ENCODE measurements at regions of chr6 and their contacts with region 1.

Region 1: GRCh38 chr6:36724514-36725390 is 27.1 kb downstream of the RAB44 start:
- DNase-seq: peak; percentile 49 to 67
- H3K4me3 ChIP-seq: no peak overlapping the region
- H3K27ac ChIP-seq: no peak overlapping the region
- H3K4me1 ChIP-seq: no peaks in the 10 kb centered on the region
- H3K27me3 ChIP-seq: no peaks in the 10 kb centered on the region
- CTCF ChIP-seq: peak; percentile 79

Region 2: DNA sequence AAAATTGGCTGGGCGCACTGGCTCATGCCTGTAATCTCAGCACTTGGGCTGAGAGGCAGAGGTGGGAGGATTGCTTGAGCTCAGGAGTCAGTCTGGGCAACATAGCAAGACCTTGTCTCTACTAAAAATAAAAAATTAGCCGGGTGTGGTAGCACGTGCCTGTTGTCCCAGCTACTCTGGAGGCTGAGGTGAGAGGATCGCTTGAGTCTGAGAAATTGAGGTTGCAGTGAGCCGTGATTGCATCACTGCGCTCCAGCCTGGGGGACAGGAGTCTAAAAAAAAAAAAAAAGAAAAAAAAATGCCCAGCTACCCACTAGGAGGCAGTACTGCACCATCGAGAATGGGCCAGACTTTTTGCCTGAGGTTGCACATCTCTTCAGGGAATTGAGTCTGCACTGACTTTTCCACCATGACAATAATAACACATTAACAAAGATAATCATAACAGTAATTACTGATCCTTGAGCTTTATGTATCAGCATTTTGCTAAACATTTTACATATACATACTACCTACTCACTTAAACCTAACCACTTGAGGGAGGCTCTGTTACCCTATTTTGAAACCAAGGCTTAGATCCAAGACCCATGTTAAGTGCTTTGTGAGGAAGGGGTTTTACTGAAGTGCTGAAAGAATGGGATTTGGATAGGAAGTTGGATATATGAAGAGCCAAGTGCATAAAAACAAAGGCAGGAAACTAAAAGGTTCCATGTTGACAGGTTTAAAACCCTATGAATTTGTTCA is 109.6 kb before region 1 on chr6:
- CTCF ChIA-PET with region 1: interaction called, 3 read pairs
- POLR2A ChIA-PET with region 1: no interaction called
- intact Hi-C with region 1: loop called (anchors 1 kb)
- DNase-seq: peak; percentile 43 to 63
- H3K4me3 ChIP-seq: no peak overlapping the region
- H3K27ac ChIP-seq: no peak overlapping the region
- H3K4me1 ChIP-seq: peaks cover 24% of the 10 kb centered on the region
- H3K27me3 ChIP-seq: no peaks in the 10 kb centered on the region
- CTCF ChIP-seq: peak; percentile 83

Region 3: GRCh38 chr6:36623547-36624459 is 100.9 kb before region 1 on chr6:
- CTCF ChIA-PET with region 1: no interaction called
- POLR2A ChIA-PET with region 1: no interaction called
- intact Hi-C with region 1: loop called (anchors 1 kb)
- DNase-seq: peak; percentile 49 to 76
- H3K4me3 ChIP-seq: no peak overlapping the region
- H3K27ac ChIP-seq: no peak overlapping the region
- H3K4me1 ChIP-seq: no peaks in the 10 kb centered on the region
- H3K27me3 ChIP-seq: no peaks in the 10 kb centered on the region
- CTCF ChIP-seq: peak; percentile 96

Region 4: DNA sequence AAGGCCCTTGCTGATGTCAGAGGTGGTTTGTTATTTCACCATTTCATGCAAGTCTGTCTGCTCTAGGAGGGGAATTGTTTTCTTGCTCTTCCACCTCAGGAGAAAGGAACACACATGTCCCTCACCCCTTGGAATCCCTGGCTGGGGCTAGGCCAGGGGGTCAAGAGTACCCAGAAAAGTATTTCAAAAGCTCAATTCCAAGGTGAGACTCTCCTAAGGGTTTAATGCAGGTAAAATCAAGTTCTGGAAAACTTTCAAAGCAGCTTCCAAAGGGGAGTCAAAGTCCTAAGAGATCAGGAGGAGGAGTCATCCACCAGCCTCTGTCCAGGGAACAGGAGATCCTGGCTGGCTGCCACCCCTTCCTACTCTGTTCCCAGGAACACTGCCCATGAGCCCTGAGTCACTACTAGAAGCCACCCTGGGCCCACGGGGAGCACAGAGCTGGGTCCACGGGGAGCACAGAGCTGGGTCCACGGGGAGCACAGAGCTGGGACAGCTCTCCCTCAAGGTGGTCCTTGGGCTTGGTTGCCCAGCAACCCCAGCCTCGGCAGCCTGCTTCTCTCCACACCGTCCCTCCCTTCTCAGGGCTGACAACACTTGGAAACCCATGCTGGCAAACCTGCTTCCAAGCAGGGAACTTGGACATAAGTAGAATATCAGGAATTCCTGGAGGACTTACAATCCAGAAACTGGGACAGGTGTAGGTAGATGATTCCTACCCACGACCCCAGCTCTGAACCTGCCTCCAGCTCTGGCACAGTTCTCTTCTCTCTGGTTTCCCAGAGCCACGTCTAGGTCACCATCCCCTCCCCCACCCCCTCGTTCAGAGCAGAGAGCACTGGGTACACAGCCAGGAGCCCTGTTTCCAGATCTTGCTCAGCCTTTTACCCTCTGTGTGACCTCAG is 81.6 kb before region 1 on chr6:
- CTCF ChIA-PET with region 1: no interaction called
- POLR2A ChIA-PET with region 1: no interaction called
- intact Hi-C with region 1: no loop called
- DNase-seq: peak; percentile 47 to 56
- H3K4me3 ChIP-seq: no peak overlapping the region
- H3K27ac ChIP-seq: peak overlapping the region; percentile 45
- H3K4me1 ChIP-seq: peaks cover 30% of the 10 kb centered on the region
- H3K27me3 ChIP-seq: no peaks in the 10 kb centered on the region
- CTCF ChIP-seq: no peak

Region 5: GRCh38 chr6:36735110-36736071 is 10.6 kb after region 1 on chr6:
- CTCF ChIA-PET with region 1: no interaction called
- POLR2A ChIA-PET with region 1: no interaction called
- intact Hi-C with region 1: no loop called
- DNase-seq: peak in 1 of 2 experiments; percentile 35
- H3K4me3 ChIP-seq: no peak overlapping the region
- H3K27ac ChIP-seq: no peak overlapping the region
- H3K4me1 ChIP-seq: no peaks in the 10 kb centered on the region
- H3K27me3 ChIP-seq: no peaks in the 10 kb centered on the region
- CTCF ChIP-seq: no peak

Measured in PC-9 (cell line).